ENCODE measurements at regions of chr5 and their contacts with region 1.

Region 1: GRCh38 chr5:59039296-59040023 is 456.6 kb downstream of the RAB3C start:
- DNase-seq: no peak
- ATAC-seq: peak; percentile 75
- H3K4me3 ChIP-seq: peak overlapping the region; percentile 58 to 77 (median 64)
- H3K27ac ChIP-seq: peak overlapping the region; percentile 57
- H3K4me1 ChIP-seq: peaks cover 64% of the 10 kb centered on the region
- H3K27me3 ChIP-seq: peaks cover 0 to 13% of the 10 kb centered on the region in 2 experiments; a peak in 1 of 5 replicates
- CTCF ChIP-seq: no peak
- EP300 ChIP-seq: no peak
- POLR2A ChIP-seq: no peak
- RAD21 ChIP-seq: peak; percentile 13; the same call in 1 of the 2 replicates

Region 2: DNA sequence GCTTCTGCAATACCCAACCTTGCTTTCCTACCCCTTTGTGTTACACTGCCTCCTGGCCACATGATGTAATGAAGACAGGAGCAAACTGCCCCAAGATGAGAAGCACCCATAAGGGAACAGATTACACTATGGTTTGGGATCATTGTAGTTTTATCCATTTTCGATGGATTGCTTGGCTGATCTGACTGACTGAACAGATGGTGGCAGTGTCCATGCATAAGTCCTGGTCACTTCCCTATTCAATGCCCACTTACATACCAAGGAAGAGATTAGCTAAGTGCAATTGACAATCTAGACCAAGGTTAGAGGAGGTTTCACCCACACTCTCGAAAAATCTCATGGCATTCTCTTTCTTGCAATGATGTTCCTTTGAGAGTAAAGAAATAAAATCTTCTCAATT is 136.7 kb before region 1 on chr5:
- CTCF ChIA-PET with region 1: no interaction called
- POLR2A ChIA-PET with region 1: no interaction called
- in situ Hi-C with region 1: no loop called
- intact Hi-C with region 1: no loop called
- DNase-seq: no peak
- ATAC-seq: no peak
- H3K4me3 ChIP-seq: no peak overlapping the region
- H3K27ac ChIP-seq: no peak overlapping the region
- H3K4me1 ChIP-seq: no peaks in the 10 kb centered on the region
- H3K27me3 ChIP-seq: peaks cover 0 to 10% of the 10 kb centered on the region in 2 experiments; a peak in 1 of 5 replicates
- CTCF ChIP-seq: 0 out of 2 replicates have a peak, but pooled peaks have one; percentile 10
- EP300 ChIP-seq: no peak
- POLR2A ChIP-seq: no peak
- RAD21 ChIP-seq: no peak

Region 3: DNA sequence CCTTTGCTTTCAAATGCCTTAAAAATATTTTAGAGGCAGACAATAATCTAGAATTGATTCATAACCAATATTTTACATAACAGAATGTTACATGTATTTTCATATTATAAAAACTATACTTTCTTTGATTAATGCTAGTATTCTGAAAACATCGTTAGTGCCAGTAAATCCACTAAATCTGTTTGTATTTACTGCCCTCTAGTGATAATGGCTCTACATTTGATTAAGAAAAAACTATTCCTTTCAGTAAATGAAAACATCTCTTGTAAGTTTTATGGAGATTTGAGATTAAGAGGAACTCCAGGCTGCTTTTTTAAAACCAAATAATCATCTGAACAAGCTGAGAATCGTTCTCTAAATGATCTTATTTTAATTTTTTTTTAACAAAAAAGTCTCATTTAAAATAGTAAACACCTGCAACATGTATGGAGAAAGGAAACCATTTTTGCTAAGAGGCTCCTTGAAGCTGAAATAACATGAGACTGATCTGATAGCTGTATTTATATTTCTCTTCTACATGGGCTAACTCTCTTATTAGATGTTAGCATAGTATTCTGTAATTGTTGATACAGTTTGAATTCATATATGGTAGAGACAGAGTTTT is 31.9 kb before region 1 on chr5:
- CTCF ChIA-PET with region 1: no interaction called
- POLR2A ChIA-PET with region 1: no interaction called
- in situ Hi-C with region 1: no loop called
- intact Hi-C with region 1: no loop called
- DNase-seq: no peak
- ATAC-seq: no peak
- H3K4me3 ChIP-seq: no peak overlapping the region
- H3K27ac ChIP-seq: no peak overlapping the region
- H3K4me1 ChIP-seq: no peaks in the 10 kb centered on the region
- H3K27me3 ChIP-seq: no peaks in the 10 kb centered on the region
- CTCF ChIP-seq: 0 out of 2 replicates have a peak, but pooled peaks have one; percentile 5
- EP300 ChIP-seq: no peak
- POLR2A ChIP-seq: no peak
- RAD21 ChIP-seq: no peak

Region 4: GRCh38 chr5:59061377-59061776 is 21.9 kb after region 1 on chr5:
- CTCF ChIA-PET with region 1: no interaction called
- POLR2A ChIA-PET with region 1: no interaction called
- in situ Hi-C with region 1: no loop called
- intact Hi-C with region 1: no loop called
- DNase-seq: peak; percentile 73
- ATAC-seq: peak; percentile 89
- H3K4me3 ChIP-seq: no peak overlapping the region
- H3K27ac ChIP-seq: peak overlapping the region; percentile 33
- H3K4me1 ChIP-seq: peaks cover 65% of the 10 kb centered on the region
- H3K27me3 ChIP-seq: no peaks in the 10 kb centered on the region
- CTCF ChIP-seq: no peak
- EP300 ChIP-seq: peak in 1 of 2 experiments; percentile 79; a peak in 2 of 4 replicates
- POLR2A ChIP-seq: no peak
- RAD21 ChIP-seq: no peak

Region 5: DNA sequence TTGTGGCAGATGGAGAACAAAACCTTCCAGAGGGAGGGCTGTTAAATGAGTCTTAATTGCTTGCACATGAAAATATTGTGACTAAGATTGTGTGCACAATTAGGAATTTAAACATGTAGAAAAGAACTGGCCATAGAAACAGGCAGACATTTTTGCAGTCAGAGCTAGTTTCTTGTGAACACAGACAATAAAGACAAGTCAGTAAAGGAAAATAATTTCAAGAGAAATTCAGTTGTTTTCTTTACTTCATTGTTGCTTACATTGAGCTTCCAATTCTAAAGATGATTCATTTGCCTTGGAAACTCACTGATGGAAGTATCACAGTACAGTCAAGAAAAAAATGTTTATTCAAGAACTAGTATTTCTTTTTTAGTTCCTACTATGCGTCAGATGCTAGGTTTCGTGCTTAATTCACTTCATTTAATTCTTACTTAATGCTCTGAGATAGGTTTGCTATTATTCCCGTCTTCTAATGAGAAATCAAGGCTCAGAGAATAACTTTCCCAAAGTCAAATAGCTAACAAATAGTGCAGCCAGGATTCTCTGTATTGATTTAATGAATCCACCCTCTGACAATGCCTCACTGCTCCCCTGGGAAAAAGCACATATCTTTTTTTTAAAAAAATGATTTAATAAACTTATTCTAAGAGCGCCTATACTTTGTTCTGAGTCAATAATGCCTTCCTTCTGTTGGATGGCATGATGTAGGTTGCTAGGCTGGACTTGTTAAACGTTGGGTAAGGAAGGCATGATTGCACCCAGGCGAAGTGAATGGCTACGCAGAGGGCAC is 124.8 kb after region 1 on chr5:
- CTCF ChIA-PET with region 1: no interaction called
- POLR2A ChIA-PET with region 1: no interaction called
- in situ Hi-C with region 1: loop called (anchors 10 kb)
- intact Hi-C with region 1: no loop called
- DNase-seq: no peak
- ATAC-seq: no peak
- H3K4me3 ChIP-seq: no peak overlapping the region
- H3K27ac ChIP-seq: no peak overlapping the region
- H3K4me1 ChIP-seq: peaks cover 9% of the 10 kb centered on the region; the same call in 1 of the 2 replicates
- H3K27me3 ChIP-seq: no peaks in the 10 kb centered on the region
- CTCF ChIP-seq: no peak
- EP300 ChIP-seq: no peak
- POLR2A ChIP-seq: no peak
- RAD21 ChIP-seq: no peak

Region 6: DNA sequence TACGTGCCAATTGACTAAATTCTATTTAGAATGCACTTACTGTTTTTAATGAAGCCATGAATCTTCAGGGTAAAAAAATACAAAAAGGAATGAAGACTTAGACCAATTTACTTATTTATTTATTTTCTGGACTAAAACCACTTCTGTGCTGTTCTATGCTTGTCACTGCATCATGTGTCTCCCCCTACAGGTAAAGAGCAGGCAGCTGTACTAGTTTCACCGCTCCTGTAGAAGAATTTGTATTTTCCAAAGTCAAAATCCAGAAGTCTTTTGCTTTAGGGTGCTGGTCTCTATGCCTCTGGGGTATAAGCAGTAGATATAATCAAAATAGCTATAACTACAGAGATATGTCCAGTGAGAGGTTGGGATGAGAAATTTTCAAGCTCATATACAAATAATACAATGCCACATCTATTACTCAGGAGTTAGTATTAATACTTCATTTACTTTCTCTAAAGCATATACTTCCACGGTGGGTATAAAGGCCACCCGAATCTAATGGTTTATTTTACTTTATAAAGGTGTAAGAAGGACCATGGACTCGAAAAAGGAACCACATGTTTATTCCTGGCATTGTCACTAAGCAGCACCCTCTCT is 134.9 kb after region 1 on chr5:
- CTCF ChIA-PET with region 1: interaction called, 6 read pairs
- POLR2A ChIA-PET with region 1: no interaction called
- in situ Hi-C with region 1: loop called (anchors 10 kb)
- intact Hi-C with region 1: loop called (anchors 1 kb)
- DNase-seq: peak; percentile 63
- ATAC-seq: peak; percentile 88
- H3K4me3 ChIP-seq: no peak overlapping the region
- H3K27ac ChIP-seq: no peak overlapping the region
- H3K4me1 ChIP-seq: no peaks in the 10 kb centered on the region
- H3K27me3 ChIP-seq: no peaks in the 10 kb centered on the region
- CTCF ChIP-seq: peak; percentile 77
- EP300 ChIP-seq: no peak
- POLR2A ChIP-seq: no peak
- RAD21 ChIP-seq: peak; percentile 85